ENCODE measurements at regions of chr3 and their contacts with region 1.

Region 1: DNA sequence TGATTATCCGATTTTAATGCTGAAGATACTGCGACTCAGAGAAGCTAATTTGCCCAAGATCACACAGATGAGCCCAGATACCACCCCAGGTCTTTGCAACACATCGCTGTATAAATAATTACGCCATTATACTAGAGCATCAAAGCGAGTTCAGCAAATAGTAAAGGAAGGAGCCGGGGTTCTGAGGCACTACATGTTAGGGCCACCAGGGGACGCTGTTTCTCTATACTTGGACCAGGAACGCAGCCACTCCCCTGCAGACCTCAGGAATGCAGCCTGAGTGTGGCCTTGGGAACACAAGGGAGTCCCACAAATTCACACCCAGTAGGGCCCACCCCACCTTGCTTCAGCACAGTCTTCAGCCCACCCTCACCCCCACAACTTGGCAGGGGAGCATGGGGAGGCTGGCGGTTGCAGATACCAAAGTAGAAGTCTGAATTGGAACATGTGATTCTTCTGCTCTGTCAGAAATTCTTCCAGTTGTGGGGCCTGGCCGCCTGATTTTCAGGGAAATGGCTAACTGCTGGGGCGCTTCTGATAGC is 57.8 kb upstream of the RYK start:
- DNase-seq: peak; percentile 75 to 91 (median 84)
- H3K4me3 ChIP-seq: peak overlapping the region in 51 of 59 donors; percentile 8 to 63 (median 38)
- H3K27ac ChIP-seq: peak overlapping the region; percentile 7 to 94 (median 86)
- H3K27me3 ChIP-seq: no peaks in the 10 kb centered on the region
- CTCF ChIP-seq: peak; percentile 98 to 100 (median 100)

Region 2: DNA sequence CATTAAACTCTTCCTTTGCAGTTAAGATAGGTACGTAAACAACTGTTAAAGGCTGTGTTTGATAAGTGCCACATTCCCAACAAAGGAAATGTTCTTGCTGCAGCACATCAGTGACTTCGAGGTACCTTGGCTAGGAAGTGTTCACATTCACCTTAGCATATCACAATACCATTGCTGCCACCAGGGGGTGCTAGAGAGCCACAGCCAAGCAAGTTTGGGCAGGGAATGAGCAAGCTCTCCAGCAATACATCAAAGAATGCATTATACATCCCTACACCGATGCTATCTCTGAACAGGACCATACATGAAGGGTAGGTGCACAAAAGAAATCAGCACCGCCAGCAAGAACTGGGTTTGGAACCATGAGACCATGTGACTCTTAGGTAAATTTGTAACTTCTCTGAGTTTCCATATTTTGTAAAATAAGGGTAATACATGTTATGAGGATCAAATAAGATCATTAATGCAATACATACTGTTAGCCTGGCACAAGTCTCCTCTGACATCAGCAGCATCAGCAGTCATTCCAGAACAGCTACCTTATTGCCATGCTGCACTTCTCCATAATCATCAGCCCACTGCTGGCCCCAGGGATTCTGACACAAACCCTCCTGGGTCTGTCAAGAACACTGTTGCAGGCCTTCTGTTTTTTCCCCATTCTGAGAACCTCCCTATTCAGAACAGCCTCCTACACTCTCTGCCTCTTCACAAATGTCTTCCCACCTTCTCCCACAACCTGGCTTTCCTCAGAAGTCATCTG is 95.3 kb before region 1 on chr3:
- intact Hi-C with region 1: loop called in 1 of 2 experiments (anchors 5 kb)
- DNase-seq: peak; percentile 72 to 93 (median 85)
- H3K4me3 ChIP-seq: no peak overlapping the region
- H3K27ac ChIP-seq: peak overlapping the region in 9 of 59 donors; percentile 7 to 48 (median 17)
- H3K27me3 ChIP-seq: no peaks in the 10 kb centered on the region
- CTCF ChIP-seq: peak; percentile 86 to 100 (median 97)

Region 3: GRCh38 chr3:134366928-134367811 is 58.7 kb after region 1 on chr3:
- intact Hi-C with region 1: loop called in 1 of 2 experiments (anchors 2 kb)
- DNase-seq: peak; percentile 26 to 96 (median 92)
- H3K4me3 ChIP-seq: peak overlapping the region in 25 of 59 donors; percentile 0 to 93 (median 15)
- H3K27ac ChIP-seq: peak overlapping the region; percentile 80 to 100 (median 100)
- H3K27me3 ChIP-seq: no peaks in the 10 kb centered on the region
- CTCF ChIP-seq: peak in 48 of 56 donors; percentile 6 to 68 (median 37)

Region 4: DNA sequence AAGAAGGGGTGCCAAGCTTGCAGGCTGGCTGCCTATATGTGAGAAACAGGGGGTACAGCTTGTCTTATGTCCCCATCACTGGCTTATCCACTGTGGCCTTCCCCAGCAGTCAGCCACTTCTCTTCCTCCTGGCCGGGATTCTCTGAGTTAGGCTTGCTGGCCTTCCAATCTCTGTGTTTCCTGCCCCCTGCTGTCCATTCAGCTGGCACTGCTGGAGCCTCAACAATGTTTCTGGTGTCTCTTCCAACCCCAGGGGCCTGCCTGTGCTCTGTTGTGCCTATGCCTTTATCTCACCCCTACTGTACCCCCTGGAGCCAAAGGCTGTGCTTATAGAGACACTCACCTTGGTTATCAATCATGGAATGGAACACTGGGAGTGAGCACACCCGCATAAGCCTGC is 140.9 kb after region 1 on chr3:
- intact Hi-C with region 1: loop called in 1 of 2 experiments (anchors 2 kb)
- DNase-seq: peak; percentile 44 to 77 (median 65)
- H3K4me3 ChIP-seq: no peak overlapping the region
- H3K27ac ChIP-seq: peak overlapping the region in 36 of 59 donors; percentile 6 to 78 (median 53)
- H3K27me3 ChIP-seq: no peaks in the 10 kb centered on the region
- CTCF ChIP-seq: peak in 55 of 56 donors; percentile 14 to 79 (median 60)